ENCODE measurements at regions of chr11 and their contacts with region 1.

Region 1: DNA sequence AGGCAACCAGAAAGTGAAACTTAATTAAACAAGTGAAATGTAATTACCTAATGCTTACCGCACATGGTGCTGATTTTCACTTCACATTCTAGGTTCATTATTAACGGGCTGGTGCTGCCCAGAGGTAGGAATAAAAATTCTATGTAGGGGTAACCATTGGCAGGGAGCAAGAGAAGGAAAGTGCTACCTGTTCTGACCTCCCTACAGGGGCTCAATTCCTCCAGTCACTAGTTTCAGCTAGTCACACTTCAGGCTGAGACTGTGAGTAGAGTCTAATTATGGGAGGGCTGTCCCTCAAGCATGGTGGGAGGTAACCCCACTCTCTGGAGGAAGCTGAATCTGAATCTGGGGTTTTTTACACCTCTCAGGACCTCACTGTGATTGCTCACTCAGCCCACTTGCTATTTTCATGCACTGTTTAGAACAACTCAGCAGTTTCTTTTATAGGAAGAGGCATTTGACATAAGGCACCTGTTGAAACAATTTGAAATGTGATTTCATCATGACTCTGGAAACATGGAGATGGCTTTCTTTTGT is 75.4 kb downstream of the MAML2 start:
- DNase-seq: no peak
- H3K4me3 Mint-ChIP-seq: no peak overlapping the region
- H3K27ac Mint-ChIP-seq: peak overlapping the region; percentile 96
- H3K4me1 Mint-ChIP-seq: peaks cover 30% of the 10 kb centered on the region
- H3K27me3 Mint-ChIP-seq: no peaks in the 10 kb centered on the region
- CTCF ChIP-seq: no peak

Region 2: GRCh38 chr11:96279018-96279895 is 11.7 kb after region 1 on chr11:
- CTCF ChIA-PET with region 1: interaction called, 9 read pairs
- POLR2A ChIA-PET with region 1: interaction called, 32 read pairs
- intact Hi-C with region 1: no loop called
- DNase-seq: peak; percentile 66
- H3K4me3 Mint-ChIP-seq: no peak overlapping the region
- H3K27ac Mint-ChIP-seq: peak overlapping the region; percentile 25
- H3K4me1 Mint-ChIP-seq: peaks cover 35% of the 10 kb centered on the region
- H3K27me3 Mint-ChIP-seq: no peaks in the 10 kb centered on the region
- CTCF ChIP-seq: no peak

Region 3: DNA sequence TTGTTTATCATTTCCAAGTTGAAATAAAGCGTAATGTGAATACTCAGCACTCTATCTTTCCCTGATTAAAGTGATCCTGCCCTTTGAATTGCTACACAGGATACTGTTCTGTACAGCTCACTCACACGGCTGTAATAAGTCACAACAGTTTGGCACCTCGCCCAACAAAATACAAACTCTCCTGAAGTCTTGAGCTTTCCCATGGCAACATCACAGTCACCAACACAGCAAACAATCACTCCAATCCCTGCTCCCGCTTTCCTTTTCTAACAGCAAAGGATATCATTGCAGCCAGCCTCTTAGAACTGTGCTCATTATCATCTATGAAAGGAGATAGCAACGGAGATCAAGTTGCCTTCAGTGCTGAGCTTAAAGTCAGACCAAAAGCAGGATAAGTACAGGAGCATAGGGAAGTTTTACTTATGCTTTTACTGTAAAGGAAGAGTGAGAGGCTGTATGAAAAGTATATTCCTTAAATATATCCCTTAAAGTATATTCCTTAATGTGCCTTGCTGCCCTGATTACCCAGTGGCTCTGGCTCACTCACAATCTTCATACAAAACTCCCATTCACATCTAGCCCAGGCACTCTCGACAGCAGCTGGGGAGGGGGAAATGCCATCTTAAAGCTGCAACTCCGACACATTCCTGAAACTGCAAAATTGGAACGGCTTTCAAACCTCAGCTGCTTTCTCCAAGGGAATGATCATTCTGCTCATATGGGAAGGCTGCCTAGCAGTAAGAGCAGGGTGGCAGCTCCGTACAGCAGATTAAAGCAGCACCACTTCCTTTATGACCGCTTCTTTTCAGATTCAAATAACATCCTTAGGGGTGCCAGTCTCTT is 39.6 kb after region 1 on chr11:
- CTCF ChIA-PET with region 1: no interaction called
- POLR2A ChIA-PET with region 1: interaction called, 76 read pairs
- intact Hi-C with region 1: loop called (anchors 5 kb)
- DNase-seq: peak; percentile 100
- H3K4me3 Mint-ChIP-seq: peak overlapping the region; percentile 68
- H3K27ac Mint-ChIP-seq: peak overlapping the region; percentile 97
- H3K4me1 Mint-ChIP-seq: peaks cover 59% of the 10 kb centered on the region
- H3K27me3 Mint-ChIP-seq: no peaks in the 10 kb centered on the region
- CTCF ChIP-seq: no peak